Motor neuron (in vitro differentiated cells): ENCODE measurements at regions of chr15 and their contacts with region 1.

Region 1: GRCh38 chr15:38563723-38564519 is 693 bp downstream of the RASGRP1 start:
- ATAC-seq: peak; percentile 74 to 88 (median 83)
- H3K4me3 ChIP-seq: peak overlapping the region; percentile 49 to 81 (median 52)
- H3K27ac ChIP-seq: no peak overlapping the region
- H3K4me1 ChIP-seq: no peaks in the 10 kb centered on the region

Region 2: GRCh38 chr15:38683382-38684242 is 119.7 kb after region 1 on chr15:
- in situ Hi-C with region 1: loop called in 2 of 9 experiments (anchors 10 to 25 kb)
- ATAC-seq: peak; percentile 64 to 98 (median 84)
- H3K4me3 ChIP-seq: no peak overlapping the region
- H3K27ac ChIP-seq: no peak overlapping the region
- H3K4me1 ChIP-seq: no peaks in the 10 kb centered on the region